ENCODE measurements at regions of chr15 and their contacts with region 1.

Region 1: GRCh38 chr15:40367686-40368611 is 9.9 kb downstream of the DISP2 start:
- DNase-seq: peak; percentile 93 to 98 (median 97)
- H3K4me3 ChIP-seq: peak overlapping the region; percentile 30 to 71 (median 46)
- H3K27ac ChIP-seq: no peak overlapping the region
- H3K4me1 ChIP-seq: peaks cover 4 to 20% (median 18%) of the 10 kb centered on the region in 4 experiments
- H3K27me3 ChIP-seq: no peaks in the 10 kb centered on the region

Region 2: DNA sequence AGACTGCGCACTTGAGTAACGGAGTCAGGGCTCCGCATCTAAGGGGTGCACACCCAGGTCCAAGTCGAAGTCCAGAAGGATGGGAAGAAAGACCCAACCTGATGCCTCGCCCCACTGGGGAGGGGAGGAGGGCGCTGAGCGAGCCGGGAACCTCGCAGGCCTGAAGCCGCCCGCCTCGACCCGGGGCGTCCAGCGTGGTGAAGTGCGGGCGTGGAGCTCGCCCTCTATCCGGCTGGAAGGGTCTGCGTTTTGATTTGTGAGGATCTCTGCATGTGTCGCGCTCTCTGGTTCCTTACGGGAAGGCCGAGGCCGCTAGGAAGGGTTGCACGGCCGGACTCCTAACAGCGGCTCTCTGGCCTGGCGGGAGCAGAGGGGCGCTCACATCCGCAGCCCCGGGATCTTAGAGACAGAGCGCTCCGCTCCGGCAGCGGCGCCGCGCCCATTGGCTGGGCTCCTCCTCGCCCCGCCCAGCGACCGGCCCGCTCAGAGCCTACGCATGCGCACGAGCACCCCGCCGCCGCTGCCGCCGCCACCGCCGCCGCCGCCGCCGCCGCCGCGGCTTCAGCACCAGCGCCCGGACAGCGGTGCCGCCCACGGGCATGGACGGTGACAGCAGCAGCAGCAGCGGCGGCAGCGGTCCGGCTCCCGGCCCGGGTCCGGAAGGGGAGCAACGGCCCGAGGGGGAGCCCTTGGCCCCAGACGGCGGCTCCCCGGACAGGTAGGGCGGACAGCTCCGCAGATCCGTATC is 10.1 kb before region 1 on chr15 and contains the start of gene DISP2:
- CTCF ChIA-PET with region 1: interaction called, 28 read pairs
- POLR2A ChIA-PET with region 1: interaction called, 3 read pairs
- DNase-seq: peak; percentile 66 to 81 (median 80)
- H3K4me3 ChIP-seq: peak within 1 kb of the TSS; percentile 23 to 78 (median 62)
- H3K27ac ChIP-seq: no peak within 1 kb of the TSS
- H3K4me1 ChIP-seq: peaks cover 0 to 22% (median 17%) of the 10 kb centered on the region in 4 experiments
- H3K27me3 ChIP-seq: peaks cover 0 to 2% (median 0%) of the 10 kb centered on the region in 5 experiments

Region 3: DNA sequence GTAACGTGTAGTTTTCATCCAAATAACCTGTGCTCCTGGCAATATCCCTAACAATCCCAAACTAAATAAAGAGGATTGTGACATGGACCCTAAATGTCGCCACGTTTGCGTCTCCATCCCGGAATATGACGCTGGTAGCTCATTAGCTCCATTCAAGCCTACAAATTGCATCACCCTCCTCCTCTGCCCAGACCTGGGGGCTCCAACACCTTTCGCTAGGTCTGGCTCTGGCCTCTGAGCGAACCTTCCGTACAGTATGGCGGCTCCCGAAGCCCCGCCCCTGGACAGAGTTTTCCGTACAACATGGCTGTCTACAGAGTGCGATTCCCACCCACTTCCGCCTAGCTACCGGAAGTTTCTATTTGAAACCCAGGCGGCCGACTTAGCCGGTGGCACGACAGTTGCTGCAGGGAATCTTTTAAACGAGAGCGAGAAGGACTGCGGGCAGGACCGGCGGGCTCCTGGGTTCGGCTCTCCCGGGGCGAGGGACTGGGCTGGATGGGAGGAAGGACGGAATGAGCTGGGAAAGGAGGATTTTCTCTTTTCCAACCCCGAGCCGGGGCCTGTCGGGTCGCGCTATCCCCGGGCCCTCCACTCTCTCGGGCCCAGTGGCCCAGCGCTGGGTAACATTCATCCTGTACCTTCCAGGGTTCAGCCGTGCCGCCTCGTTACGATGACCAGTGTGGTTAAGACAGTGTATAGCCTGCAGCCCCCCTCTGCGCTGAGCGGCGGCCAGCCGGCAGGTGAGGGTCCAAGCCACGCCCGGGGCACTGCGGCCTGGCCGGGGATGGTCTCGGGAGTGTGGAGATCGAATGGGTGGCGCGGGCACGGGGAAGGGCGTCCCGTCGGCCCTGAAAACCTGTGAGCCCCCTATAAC is 14.9 kb after region 1 on chr15 and contains the start of gene KNSTRN:
- CTCF ChIA-PET with region 1: interaction called, 33 read pairs
- POLR2A ChIA-PET with region 1: interaction called, 3 read pairs
- DNase-seq: peak; percentile 93 to 96 (median 95)
- H3K4me3 ChIP-seq: peak within 1 kb of the TSS; percentile 78 to 97 (median 93)
- H3K27ac ChIP-seq: peak within 1 kb of the TSS; percentile 54 to 83
- H3K4me1 ChIP-seq: peaks cover 5 to 21% (median 14%) of the 10 kb centered on the region in 4 experiments
- H3K27me3 ChIP-seq: no peaks in the 10 kb centered on the region

Region 4: DNA sequence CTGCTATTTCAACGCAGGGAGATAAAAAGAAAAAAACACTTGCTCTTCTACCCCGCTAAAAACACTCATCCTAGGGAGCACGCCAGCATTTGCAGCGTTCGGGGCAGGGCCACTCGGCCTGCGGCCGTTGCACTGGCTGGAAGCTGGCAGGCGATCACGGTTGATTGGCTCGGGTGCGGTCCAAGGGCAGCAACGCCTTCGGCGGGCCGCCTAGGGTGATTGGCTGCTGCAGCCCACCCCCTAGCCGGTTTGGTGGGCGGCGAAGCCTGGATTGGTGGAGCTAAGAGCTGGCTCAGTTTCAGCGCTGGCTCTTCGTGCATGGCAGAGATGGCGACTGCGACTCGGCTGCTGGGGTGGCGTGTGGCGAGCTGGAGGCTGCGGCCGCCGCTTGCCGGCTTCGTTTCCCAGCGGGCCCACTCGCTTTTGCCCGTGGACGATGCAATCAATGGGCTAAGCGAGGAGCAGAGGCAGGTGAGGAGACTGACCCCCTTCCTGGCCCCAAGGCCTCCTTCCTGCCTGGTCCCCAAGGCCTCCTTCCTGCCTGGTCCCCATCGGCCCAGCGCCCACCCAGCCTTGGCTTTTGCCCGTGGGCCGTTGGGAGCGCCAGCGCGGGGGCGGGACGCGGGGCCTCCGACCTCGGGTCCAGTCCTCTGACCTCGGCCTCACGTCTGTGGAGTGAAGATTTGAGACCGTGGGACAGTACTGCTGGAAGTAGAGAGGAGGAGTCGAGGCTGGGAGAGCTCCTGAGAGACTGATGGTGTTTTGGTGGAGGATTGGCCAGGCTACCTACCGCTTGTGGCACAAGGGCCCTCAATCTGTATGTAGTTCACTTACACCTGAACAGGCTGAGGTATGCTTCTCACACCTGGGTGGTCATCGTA is 37.8 kb after region 1 on chr15 and contains the start of gene IVD:
- CTCF ChIA-PET with region 1: interaction called, 11 read pairs
- POLR2A ChIA-PET with region 1: no interaction called
- DNase-seq: peak; percentile 92 to 97 (median 97)
- H3K4me3 ChIP-seq: peak within 1 kb of the TSS; percentile 38 to 95 (median 83)
- H3K27ac ChIP-seq: peak within 1 kb of the TSS; percentile 61 to 81
- H3K4me1 ChIP-seq: peaks cover 10 to 29% (median 25%) of the 10 kb centered on the region in 4 experiments
- H3K27me3 ChIP-seq: no peaks in the 10 kb centered on the region

Region 5: DNA sequence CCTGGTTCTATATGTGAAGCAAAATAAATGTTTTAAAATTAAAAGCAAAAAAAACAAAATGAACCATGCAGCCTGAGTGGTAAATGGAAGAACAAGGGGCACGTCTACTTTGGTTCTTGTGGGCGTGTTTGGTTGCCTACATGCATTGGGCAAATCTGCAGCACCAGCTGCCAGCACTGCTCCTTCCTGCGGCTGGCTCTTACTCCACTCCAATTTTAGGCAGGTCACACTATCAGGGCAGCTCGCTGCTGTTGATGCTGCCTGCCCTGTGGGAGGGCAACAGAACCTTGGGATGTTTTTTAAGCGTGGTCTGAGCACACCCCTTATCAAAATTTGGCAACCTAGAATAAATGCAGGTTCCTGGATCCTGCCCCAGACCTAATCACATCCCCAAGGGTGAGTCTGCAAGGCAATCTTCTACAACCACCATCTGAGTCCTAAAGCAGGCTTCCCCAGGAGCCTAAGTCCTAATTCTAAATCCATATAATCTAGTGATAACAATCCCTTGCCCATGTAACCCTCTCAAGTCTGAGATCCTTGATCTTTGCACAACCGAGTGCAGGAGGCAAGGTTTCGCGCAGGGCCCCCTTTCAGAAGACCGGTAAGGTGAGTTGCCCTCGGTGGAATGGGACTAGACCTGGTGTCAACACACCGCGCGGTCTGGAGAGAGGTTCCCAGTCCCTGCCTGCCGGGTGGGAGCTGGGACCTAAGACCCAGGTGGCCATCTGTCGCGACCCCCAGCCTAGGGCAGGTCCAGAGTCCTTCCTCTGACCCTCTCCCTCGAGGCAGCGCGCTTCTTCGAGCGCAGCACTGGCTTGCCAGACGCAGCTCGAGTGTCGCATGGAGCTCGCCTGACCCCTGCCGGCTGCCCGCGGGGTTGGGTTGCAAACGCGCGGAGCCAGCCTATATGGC is 53.6 kb after region 1 on chr15:
- CTCF ChIA-PET with region 1: interaction called, 85 read pairs
- POLR2A ChIA-PET with region 1: no interaction called
- DNase-seq: peak; percentile 65 to 81 (median 80)
- H3K4me3 ChIP-seq: peak overlapping the region in 1 of 7 experiments; percentile 50
- H3K27ac ChIP-seq: no peak overlapping the region
- H3K4me1 ChIP-seq: peaks cover 0 to 10% (median 5%) of the 10 kb centered on the region in 4 experiments
- H3K27me3 ChIP-seq: no peaks in the 10 kb centered on the region

Measured in common myeloid progenitor, CD34-positive (primary cell).